Breast epithelium (tissue), 4 donors: ENCODE measurements at regions of chr18 and their contacts with region 1.

Region 1: DNA sequence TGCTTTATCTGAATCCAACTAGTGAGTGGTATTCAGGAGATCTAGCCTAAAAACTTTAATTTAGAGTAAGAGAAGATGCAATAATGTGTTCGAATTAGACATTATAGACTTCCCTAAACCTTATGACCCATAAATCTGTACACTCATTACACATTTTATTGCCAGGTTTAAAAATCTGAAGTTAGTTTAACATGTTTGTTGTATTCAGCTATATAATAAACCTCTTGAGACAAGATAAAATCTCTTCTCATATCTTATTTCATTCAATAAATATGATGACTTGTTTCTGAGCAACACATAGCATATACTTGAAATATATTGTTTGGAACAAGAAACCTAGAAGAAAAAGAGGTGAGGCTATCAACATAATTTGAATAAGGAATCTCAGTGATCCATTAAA is 150.7 kb downstream of the CDH7 start:
- DNase-seq: no peak
- H3K4me3 ChIP-seq: no peak overlapping the region
- H3K27ac ChIP-seq: no peak overlapping the region
- H3K4me1 ChIP-seq: no peaks in the 10 kb centered on the region
- H3K27me3 ChIP-seq: no peaks in the 10 kb centered on the region
- CTCF ChIP-seq: no peak
- POLR2A ChIP-seq: no peak

Region 2: DNA sequence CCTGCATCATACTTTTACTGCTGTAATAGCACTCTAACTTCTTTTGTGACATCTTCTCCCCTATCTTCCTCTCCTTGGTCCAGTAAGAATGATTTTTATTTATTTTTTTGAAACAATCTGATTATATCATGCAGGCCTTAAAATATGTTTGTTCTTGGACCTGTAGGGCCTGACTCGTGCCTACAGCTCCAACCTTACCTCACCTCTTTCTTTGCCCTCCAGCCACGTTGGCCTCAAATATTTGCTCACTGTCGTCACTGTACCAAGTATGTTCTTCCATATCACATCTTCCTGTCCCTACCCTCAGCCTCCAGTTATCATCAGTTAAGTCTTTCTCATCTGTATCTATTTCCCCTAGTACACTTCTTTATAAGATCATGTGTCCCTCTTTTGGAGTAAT is 25.2 kb before region 1 on chr18:
- intact Hi-C with region 1: loop called (anchors 1 kb)
- DNase-seq: peak in 1 of 2 donors; percentile 52
- H3K4me3 ChIP-seq: no peak overlapping the region
- H3K27ac ChIP-seq: no peak overlapping the region
- H3K4me1 ChIP-seq: no peaks in the 10 kb centered on the region
- H3K27me3 ChIP-seq: no peaks in the 10 kb centered on the region
- CTCF ChIP-seq: no peak
- POLR2A ChIP-seq: no peak